BJ (cell line): ENCODE measurements at regions of chr12 and their contacts with region 1.

Region 1: GRCh38 chr12:47742253-47742825 is 16.3 kb downstream of the RAPGEF3 start:
- DNase-seq: no peak
- H3K4me3 ChIP-seq: no peak overlapping the region
- H3K27me3 ChIP-seq: peaks cover 6% of the 10 kb centered on the region
- CTCF ChIP-seq: peak; percentile 99

Region 2: GRCh38 chr12:47725893-47726292 is 16.4 kb before region 1 on chr12:
- CTCF ChIA-PET with region 1: interaction called, 77 read pairs
- POLR2A ChIA-PET with region 1: no interaction called
- DNase-seq: no peak
- H3K4me3 ChIP-seq: no peak overlapping the region
- H3K27me3 ChIP-seq: no peaks in the 10 kb centered on the region
- CTCF ChIP-seq: no peak

Region 3: DNA sequence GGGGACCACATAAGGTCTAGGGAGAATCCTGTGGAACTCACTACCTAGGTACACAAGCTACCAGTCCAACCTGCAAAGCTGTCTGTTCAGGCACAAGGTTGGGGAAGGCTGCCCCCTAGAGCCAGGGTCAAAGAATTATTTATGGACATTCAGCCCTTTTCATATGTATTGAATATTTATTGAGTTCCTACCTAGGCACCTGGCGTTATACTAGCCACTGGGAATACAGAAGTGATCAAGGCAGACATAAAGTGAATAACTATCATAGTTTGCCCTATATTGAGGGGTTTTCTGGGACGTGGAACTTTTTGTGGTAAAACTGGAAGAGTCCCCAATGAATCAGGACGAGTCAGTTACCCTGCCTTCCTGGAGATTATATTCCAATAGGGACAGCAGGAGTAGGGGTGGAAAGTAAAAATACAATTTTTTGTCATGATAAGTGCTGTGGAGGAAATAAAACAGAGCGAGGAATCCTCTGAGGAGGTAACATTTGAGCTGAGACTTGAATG is 24.9 kb after region 1 on chr12:
- CTCF ChIA-PET with region 1: interaction called, 454 read pairs
- POLR2A ChIA-PET with region 1: no interaction called
- DNase-seq: no peak
- H3K4me3 ChIP-seq: no peak overlapping the region
- H3K27me3 ChIP-seq: no peaks in the 10 kb centered on the region; the same call in 1 of the 2 replicates
- CTCF ChIP-seq: peak; percentile 59

Region 4: DNA sequence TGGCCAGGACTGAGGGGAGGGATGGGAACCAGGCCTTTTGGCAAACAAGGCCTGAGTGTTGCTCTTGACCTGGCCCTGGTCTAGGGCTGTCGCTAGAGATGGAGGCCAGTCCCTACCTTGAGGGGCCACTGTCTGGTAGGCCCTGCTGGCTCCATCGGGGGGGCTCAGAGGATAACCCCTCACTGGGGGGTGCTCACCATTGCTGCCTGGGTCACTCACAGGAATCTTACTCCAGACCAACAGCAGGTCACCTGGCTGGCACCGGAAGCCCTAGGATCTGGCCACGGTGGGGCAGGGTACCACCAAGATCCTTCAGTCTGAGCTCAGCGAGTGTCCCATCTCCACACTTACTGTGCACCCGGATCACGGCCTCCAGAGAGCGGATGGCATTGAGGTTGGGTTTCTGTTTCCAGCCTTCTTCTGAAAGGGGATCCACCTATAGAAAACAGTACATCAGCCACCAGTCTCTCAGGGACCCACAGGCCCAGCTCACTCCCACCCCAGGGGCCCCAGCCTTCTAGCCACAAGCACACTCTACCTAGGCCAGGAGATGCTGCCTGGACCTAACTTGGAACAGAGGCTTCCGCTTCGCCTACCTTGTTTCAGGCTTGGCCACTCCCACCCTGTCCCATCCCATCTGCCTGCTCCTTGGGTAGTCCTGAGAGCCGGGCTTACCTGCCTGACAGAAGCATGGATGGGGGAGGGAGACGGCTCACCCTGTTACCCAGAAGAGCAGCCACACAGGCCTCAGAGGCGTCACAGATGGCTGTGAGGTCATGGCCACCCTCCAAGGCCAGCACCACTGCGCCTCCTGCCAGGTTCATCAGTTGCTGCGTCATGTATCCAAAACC is 42.9 kb after region 1 on chr12:
- CTCF ChIA-PET with region 1: interaction called, 454 read pairs
- POLR2A ChIA-PET with region 1: no interaction called
- DNase-seq: no peak
- H3K4me3 ChIP-seq: no peak overlapping the region
- H3K27me3 ChIP-seq: no peaks in the 10 kb centered on the region
- CTCF ChIP-seq: no peak

Region 5: GRCh38 chr12:47819896-47820630 is 77.7 kb after region 1 on chr12 and contains the start of gene HDAC7:
- CTCF ChIA-PET with region 1: interaction called, 15 read pairs
- POLR2A ChIA-PET with region 1: no interaction called
- DNase-seq: no peak
- H3K4me3 ChIP-seq: peak within 1 kb of the TSS; percentile 68
- H3K27me3 ChIP-seq: no peaks in the 10 kb centered on the region
- CTCF ChIP-seq: no peak
- polyA plus RNA-seq, gene HDAC7: 28.2 and 67.0 TPM in 2 replicates